Endothelial cell of umbilical vein (primary cell): ENCODE measurements at regions of chr3 and their contacts with region 1.

Region 1: DNA sequence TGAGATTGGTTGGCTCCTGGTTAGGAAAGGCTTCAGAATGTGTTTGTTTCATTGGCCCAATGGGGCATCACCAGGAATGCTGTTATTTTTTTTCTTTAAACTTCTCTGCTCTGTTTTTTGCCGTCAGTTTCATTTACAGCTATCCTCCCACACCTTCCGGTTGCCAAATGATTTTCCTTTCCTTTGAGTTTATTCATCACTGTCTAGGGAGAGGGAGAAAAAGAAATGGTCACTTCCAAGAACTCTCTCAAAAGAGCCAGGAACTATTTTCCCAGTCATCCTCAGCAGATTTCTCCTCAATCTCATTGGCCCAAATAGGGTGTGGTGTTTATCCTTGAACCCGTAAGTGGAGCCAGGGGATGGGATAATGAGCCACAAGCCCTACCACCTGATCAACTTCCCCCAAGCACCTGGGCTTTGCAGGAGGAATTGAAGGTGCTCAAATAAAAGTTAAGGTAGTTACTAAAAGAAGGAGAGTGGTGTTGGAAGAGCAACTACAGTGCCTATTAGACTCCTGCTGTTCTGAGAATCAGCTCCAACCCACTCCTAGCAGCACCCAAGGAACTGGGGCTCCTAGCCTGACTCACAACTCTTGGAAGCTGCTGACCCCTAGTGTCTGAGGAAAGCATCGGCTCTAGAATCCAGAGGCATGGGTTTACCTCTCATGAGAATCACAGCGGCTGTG is 183.8 kb upstream of the IL12A start:
- DNase-seq: peak; percentile 85
- H3K4me3 ChIP-seq: no peak overlapping the region
- H3K27ac ChIP-seq: peak overlapping the region; percentile 19
- H3K4me1 ChIP-seq: peaks cover 18% of the 10 kb centered on the region
- H3K27me3 ChIP-seq: no peaks in the 10 kb centered on the region
- CTCF ChIP-seq: peak; percentile 92 to 96
- POLR2A ChIP-seq: no peak

Region 2: DNA sequence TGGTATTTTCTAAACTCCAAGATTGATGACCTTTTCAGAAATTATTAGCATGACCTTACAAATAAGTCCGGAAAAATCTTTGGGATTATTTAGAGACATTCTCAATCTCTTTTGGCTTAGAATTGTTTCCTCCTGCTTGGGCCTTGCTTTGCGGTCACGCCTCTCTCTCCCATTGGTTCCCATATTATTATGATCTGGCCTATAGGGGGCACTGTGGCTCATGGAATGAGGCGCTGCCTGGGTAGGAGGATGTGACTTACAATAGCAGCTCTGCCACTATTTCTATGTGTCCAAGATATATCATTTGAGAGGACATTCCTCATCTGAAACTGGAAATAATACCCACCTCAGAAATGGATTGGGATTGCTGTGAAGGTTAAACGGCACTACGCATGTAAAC is 538.1 kb before region 1 on chr3:
- CTCF ChIA-PET with region 1: interaction called, 46 read pairs
- POLR2A ChIA-PET with region 1: no interaction called
- dilution Hi-C with region 1: no loop called
- intact Hi-C with region 1: loop called (anchors 1 kb)
- DNase-seq: peak; percentile 29
- H3K4me3 ChIP-seq: no peak overlapping the region
- H3K27ac ChIP-seq: no peak overlapping the region
- H3K4me1 ChIP-seq: no peaks in the 10 kb centered on the region
- H3K27me3 ChIP-seq: peaks cover 4 to 12% of the 10 kb centered on the region in 2 experiments
- CTCF ChIP-seq: peak; percentile 15 to 39
- POLR2A ChIP-seq: no peak

Region 3: DNA sequence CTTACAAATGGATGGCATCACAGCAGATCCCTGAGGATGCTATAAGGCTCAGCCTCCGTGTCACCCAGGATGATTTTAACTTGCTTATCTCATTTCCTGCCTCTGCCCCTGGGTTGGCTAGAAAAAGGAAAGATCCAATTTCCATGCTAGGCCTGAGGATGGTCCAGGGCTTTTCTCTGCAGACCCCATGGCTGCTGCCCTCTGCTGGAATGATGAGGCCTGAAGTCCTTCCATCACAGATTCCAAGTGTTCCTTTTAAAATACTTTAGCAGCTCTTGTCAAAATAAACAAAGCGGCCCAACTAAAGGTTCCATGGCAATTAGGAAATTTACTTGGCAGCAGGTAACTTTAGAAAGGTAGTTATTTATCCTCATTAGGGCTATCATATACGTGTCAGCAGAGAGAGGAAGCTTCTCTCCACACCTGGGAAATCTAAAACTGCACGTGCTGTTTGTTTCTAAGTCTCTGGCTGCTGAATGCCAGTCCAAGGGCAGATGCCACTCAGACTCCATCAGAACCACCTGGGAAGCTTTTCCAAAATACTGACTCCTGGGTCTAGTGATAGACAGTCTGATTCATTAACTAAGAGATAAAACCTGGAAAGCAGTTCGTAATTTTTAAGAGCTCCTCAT is 218.2 kb before region 1 on chr3:
- CTCF ChIA-PET with region 1: interaction called, 12 read pairs
- POLR2A ChIA-PET with region 1: no interaction called
- dilution Hi-C with region 1: no loop called
- intact Hi-C with region 1: no loop called
- DNase-seq: peak; percentile 41
- H3K4me3 ChIP-seq: no peak overlapping the region
- H3K27ac ChIP-seq: no peak overlapping the region
- H3K4me1 ChIP-seq: no peaks in the 10 kb centered on the region
- H3K27me3 ChIP-seq: peaks cover 4 to 19% of the 10 kb centered on the region in 2 experiments
- CTCF ChIP-seq: peak; percentile 55 to 59
- POLR2A ChIP-seq: no peak

Region 4: GRCh38 chr3:159726231-159726964 is 78.5 kb before region 1 on chr3:
- CTCF ChIA-PET with region 1: interaction called, 11 read pairs
- POLR2A ChIA-PET with region 1: no interaction called
- dilution Hi-C with region 1: no loop called
- intact Hi-C with region 1: no loop called
- DNase-seq: no peak
- H3K4me3 ChIP-seq: no peak overlapping the region
- H3K27ac ChIP-seq: no peak overlapping the region
- H3K4me1 ChIP-seq: peaks cover 27% of the 10 kb centered on the region
- H3K27me3 ChIP-seq: peaks cover 2 to 5% of the 10 kb centered on the region in 2 experiments
- CTCF ChIP-seq: no peak
- POLR2A ChIP-seq: no peak

Region 5: GRCh38 chr3:159775372-159775961 is 29.4 kb before region 1 on chr3:
- CTCF ChIA-PET with region 1: interaction called, 58 read pairs
- POLR2A ChIA-PET with region 1: interaction called, 3 read pairs
- dilution Hi-C with region 1: no loop called
- intact Hi-C with region 1: loop called (anchors 2 kb)
- DNase-seq: peak; percentile 91
- H3K4me3 ChIP-seq: no peak overlapping the region
- H3K27ac ChIP-seq: peak overlapping the region; percentile 83
- H3K4me1 ChIP-seq: peaks cover 34% of the 10 kb centered on the region
- H3K27me3 ChIP-seq: no peaks in the 10 kb centered on the region
- CTCF ChIP-seq: no peak
- POLR2A ChIP-seq: no peak

Region 6: DNA sequence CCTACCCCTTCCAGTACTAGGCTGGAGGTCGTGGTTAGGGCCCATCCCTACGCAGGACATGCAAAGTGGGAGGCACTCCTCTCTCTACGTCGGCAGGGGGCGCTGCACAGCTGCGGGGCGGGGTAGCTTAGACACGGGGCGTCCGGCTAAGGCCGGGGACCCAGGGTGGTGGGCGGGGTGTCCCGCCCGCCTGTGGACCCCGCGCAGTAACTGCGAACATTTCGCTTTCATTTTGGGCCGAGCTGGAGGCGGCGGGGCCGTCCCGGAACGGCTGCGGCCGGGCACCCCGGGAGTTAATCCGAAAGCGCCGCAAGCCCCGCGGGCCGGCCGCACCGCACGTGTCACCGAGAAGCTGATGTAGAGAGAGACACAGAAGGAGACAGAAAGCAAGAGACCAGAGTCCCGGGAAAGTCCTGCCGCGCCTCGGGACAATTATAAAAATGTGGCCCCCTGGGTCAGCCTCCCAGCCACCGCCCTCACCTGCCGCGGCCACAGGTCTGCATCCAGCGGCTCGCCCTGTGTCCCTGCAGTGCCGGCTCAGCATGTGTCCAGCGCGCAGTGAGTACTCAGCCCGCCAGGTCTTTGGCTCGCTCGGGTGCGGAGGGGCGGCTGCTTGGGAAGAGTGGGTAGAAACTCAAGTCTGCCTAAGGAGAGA is 183.9 kb after region 1 on chr3 and contains the start of gene IL12A:
- CTCF ChIA-PET with region 1: interaction called, 20 read pairs
- POLR2A ChIA-PET with region 1: no interaction called
- dilution Hi-C with region 1: no loop called
- intact Hi-C with region 1: no loop called
- DNase-seq: peak; percentile 75
- H3K4me3 ChIP-seq: peak within 1 kb of the TSS; percentile 58 to 71 (median 60)
- H3K27ac ChIP-seq: no peak within 1 kb of the TSS
- H3K4me1 ChIP-seq: peaks cover 4% of the 10 kb centered on the region
- H3K27me3 ChIP-seq: no peaks in the 10 kb centered on the region
- CTCF ChIP-seq: peak; percentile 96 to 98
- POLR2A ChIP-seq: no peak
- total RNA-seq, gene IL12A: 1.5 and 1.7 TPM in 2 replicates